Posterior cingulate gyrus (tissue), 11 donors: ENCODE measurements at regions of chr18 and their contacts with region 1.

Region 1: GRCh38 chr18:56638271-56639093 is at the start of gene TXNL1:
- DNase-seq: peak; percentile 97 to 99 (median 98)

Region 2: DNA sequence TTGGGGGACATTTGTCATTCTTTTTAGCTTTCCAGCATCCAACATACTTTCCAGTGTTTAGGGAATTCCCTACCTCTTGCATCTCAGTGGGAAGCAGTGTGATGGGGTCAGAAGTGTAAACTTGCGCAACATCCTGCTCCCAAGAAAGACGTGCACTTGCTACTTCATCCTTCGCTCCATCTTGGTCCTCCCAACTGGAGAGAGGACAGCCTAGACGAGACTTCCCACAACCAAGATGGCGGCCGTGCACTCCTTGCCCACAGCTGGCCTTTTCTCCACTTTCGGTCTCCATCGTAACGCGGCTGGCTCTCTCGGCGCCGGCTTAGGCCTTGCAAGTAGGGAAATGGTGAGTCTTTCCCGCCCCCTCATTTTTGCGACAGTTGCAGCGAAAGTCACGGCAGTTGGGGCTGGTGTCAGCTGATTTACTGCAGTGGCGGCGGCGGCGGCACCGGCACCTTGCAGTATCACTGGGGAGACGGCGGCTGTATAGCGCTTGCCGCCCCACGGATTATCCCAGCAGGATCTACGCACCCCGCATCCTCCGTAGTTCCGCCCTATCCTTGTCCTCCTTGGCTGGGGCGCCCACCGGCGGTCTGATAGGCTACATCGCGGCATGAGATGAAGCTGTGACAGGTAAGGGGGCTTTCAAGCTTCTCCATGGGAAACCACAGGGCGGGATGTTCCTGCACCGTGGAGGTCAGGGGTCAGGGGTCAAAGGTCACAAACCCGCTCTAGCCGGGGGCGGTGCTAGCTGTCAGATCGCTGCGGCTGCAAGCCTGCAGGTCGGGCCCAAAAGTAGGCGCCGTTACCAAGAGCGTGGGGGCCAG is 12.7 kb after region 1 on chr18 and contains the start of gene WDR7:
- intact Hi-C with region 1: loop called (anchors 1 kb)
- DNase-seq: peak; percentile 91 to 100 (median 98)